ENCODE measurements at regions of chr5 and their contacts with region 1.

Region 1: GRCh38 chr5:41856644-41857491 is 13.4 kb downstream of the OXCT1 start:
- DNase-seq: no peak

Region 2: DNA sequence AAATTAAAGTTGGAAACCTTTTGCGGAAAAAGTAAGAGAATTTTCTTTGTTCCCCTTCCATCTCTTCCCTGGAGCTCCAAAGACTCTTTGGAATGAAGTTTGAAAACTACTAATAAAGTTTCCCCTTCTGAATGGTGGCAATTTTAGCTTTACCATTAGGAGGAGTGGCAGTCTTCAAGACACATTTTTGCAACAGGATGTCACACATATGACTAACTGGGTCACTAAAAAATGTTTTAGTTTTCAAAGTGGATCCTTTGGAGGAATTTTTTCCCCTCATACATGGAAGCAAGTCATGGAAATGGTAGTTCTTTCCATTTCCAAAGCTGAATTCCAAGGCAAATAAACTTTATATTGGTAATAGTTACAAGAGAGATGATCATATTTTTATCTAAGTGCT is 83.8 kb after region 1 on chr5:
- intact Hi-C with region 1: no loop called
- DNase-seq: no peak

Region 3: GRCh38 chr5:42057254-42057690 is 200.4 kb after region 1 on chr5:
- intact Hi-C with region 1: loop called (anchors 2 kb)
- DNase-seq: no peak

Region 4: DNA sequence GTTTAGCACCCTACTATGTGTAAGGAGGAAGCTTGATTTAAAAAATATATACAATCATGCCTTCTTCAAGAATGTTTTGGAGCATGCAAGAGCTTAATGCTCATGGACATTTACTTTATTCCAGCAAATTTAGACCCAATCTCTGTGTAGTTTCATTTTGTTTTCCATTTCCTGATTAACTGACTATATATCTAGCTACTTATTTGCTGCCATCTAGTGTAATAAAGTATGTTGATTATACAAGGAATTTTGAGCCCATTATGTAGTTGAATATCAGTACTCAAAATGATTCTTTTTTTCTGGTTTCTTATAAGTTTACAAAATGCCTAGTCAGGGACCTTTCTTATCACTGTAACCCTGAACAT is 799.8 kb after region 1 on chr5:
- intact Hi-C with region 1: loop called (anchors 10 kb)
- DNase-seq: no peak

Region 5: DNA sequence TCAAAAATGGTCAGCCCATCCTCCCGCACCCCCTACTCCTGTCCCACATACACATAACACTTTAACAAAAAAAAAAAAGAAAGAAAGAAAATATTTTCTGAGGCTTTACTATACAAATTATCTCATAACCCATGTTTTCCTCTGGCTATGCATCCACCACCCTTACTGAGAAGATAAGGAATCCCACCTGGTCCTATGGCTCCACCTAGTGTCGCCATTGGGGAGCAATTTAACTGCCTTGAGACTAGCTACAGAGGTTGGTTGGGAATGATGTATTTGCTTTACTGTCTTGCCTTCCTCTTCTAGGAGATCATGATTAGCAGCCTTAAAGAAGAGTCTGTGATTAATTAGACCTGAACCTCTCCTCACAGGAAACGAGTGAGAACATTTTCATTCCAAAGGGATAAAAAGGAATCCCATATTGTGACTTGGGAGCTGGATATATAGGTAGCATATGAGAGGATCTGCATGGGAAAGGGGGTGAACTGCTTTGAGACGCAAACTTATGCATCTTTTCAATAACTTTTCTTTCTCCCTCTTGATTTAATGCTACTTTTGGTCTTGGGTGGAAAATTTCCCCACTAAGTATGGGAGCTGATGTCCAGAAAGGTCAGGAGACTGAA is 1032.6 kb after region 1 on chr5:
- intact Hi-C with region 1: loop called (anchors 5 kb)
- DNase-seq: peak; percentile 78

Measured in cardiac septum (tissue), 1 donor.